Gastrocnemius medialis (tissue), 4 donors: ENCODE measurements at regions of chr11 and their contacts with region 1.

Region 1: GRCh38 chr11:131064373-131064991 is 148.2 kb upstream of the SNX19 start:
- DNase-seq: no peak
- ATAC-seq: no peak
- H3K4me3 ChIP-seq: no peak overlapping the region
- H3K27ac ChIP-seq: no peak overlapping the region
- H3K4me1 ChIP-seq: no peaks in the 10 kb centered on the region
- H3K27me3 ChIP-seq: peaks cover 0 to 7% (median 0%) of the 10 kb centered on the region in 3 donors
- CTCF ChIP-seq: peak in 2 of 5 experiments; percentile 58 to 59
- POLR2A ChIP-seq: no peak

Region 2: DNA sequence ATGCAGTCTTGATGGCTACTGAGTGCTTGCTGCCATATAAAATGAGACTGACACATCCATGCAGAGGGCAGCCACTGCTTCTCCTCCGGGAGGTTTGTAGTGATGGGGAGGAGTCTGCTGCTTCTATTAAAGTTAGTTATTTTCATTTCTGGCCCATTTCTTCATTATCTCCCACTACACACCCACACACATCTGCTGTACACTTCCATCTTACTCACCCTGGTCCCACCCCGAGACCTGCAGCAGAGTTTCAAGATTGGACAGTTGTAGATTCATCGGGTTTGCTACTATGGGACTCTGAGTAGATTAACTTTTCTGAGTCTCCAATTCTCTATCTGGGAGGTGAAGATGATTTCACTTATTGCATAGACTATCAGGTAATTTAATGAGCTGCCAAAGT is 28.0 kb after region 1 on chr11:
- in situ Hi-C with region 1: no loop called
- intact Hi-C with region 1: no loop called
- DNase-seq: no peak
- ATAC-seq: no peak
- H3K4me3 ChIP-seq: no peak overlapping the region
- H3K27ac ChIP-seq: no peak overlapping the region
- H3K4me1 ChIP-seq: no peaks in the 10 kb centered on the region
- H3K27me3 ChIP-seq: no peaks in the 10 kb centered on the region
- CTCF ChIP-seq: no peak
- POLR2A ChIP-seq: no peak

Region 3: GRCh38 chr11:131186629-131187101 is 122.2 kb after region 1 on chr11:
- in situ Hi-C with region 1: no loop called
- intact Hi-C with region 1: no loop called
- DNase-seq: no peak
- ATAC-seq: no peak
- H3K4me3 ChIP-seq: no peak overlapping the region
- H3K27ac ChIP-seq: no peak overlapping the region
- H3K4me1 ChIP-seq: no peaks in the 10 kb centered on the region
- H3K27me3 ChIP-seq: no peaks in the 10 kb centered on the region
- CTCF ChIP-seq: no peak
- POLR2A ChIP-seq: no peak

Region 4: GRCh38 chr11:131275580-131275979 is 211.1 kb after region 1 on chr11:
- in situ Hi-C with region 1: no loop called
- intact Hi-C with region 1: no loop called
- DNase-seq: no peak
- ATAC-seq: no peak
- H3K4me3 ChIP-seq: no peak overlapping the region
- H3K27ac ChIP-seq: no peak overlapping the region
- H3K4me1 ChIP-seq: no peaks in the 10 kb centered on the region
- H3K27me3 ChIP-seq: no peaks in the 10 kb centered on the region
- CTCF ChIP-seq: no peak
- POLR2A ChIP-seq: no peak

Region 5: DNA sequence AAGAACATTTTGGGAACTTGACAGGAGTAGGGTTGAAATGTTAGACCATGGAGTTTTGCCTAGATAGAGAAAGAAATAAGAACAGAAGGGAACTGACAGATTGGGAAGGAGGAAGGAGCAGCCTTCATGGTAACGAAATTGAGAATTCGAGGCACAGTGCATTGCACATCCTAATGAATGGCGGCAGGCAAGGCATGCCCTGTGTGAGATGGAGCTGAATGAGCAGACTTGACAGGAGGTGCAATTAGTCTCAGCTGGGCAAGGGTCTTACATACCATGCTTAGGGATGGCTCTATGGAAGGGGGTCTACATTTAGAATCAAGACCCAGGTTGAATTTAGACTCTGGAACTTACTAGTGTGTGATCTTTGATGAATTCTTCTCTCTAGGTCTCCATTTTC is 280.9 kb after region 1 on chr11:
- in situ Hi-C with region 1: no loop called
- intact Hi-C with region 1: no loop called
- DNase-seq: no peak
- ATAC-seq: no peak
- H3K4me3 ChIP-seq: no peak overlapping the region
- H3K27ac ChIP-seq: no peak overlapping the region
- H3K4me1 ChIP-seq: no peaks in the 10 kb centered on the region
- H3K27me3 ChIP-seq: no peaks in the 10 kb centered on the region
- CTCF ChIP-seq: no peak
- POLR2A ChIP-seq: no peak

Region 6: DNA sequence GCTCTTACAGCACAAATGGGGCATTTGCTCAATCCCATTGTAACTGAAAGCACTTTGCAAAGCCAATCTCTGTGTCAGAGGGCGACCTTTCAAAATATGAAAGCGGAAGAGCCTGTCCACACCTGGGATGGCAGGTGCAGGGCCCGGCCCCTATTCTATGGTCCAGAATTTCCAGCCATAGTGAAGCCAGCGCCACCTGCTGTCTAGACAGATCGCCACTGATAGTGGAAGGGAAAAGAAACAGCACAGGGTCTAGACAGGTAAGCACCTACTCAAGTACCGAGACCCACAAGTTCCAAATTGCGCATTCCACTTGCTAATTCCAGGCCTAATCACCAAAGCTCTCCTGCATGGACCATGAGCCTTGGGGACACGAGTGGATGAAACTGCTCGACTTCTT is 447.3 kb after region 1 on chr11:
- in situ Hi-C with region 1: loop called in 2 of 4 experiments (anchors 10 to 25 kb)
- intact Hi-C with region 1: no loop called
- DNase-seq: no peak
- ATAC-seq: no peak
- H3K4me3 ChIP-seq: no peak overlapping the region
- H3K27ac ChIP-seq: no peak overlapping the region
- H3K4me1 ChIP-seq: no peaks in the 10 kb centered on the region
- H3K27me3 ChIP-seq: no peaks in the 10 kb centered on the region
- CTCF ChIP-seq: peak in 1 of 5 experiments; percentile 37
- POLR2A ChIP-seq: no peak